Common myeloid progenitor, CD34-positive (primary cell): ENCODE measurements at regions of chr20 and their contacts with region 1.

Region 1: DNA sequence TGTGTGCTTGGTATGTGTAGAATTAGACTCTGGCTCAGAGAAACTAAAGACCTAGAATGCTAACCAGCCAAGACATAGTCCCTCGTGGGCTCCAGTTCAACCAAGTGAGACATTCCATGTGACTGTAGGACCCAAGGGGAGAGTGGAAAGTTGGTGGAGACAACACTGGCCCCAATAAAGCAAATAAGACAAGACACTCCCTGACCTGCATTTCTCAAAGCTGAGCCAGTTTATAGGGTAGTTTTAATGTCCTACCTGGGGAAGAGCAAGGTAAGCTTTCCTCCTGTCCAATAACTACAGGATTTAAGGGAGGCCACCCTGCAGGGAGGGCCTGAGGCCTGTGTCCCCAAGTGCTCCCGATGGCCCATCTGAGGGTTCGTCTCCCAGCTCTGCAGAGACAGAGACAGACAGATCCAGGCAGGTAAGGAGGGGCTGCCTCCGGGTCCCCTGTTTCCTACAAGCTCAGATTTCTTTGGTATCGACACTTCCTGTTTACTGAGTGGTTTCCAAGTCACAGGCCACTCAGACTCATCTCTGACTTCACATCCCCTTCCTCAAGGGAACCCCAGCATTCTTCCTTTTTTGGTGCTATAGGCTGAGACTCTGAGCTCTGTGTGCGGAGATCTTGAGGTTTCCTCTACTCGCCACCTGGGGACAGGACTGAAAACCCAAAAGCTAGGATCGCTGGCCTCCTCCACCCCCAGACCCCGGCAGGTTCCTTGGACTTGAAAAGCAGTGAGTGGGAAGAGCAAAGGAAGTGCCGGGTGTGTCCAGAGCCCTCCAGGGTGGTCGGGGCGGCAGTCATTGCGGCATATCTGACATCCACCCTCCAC is 92.4 kb downstream of the PRND start:
- DNase-seq: peak; percentile 91 to 95 (median 94)
- H3K4me3 ChIP-seq: peak overlapping the region in 6 of 7 experiments; percentile 15 to 67 (median 60)
- H3K27ac ChIP-seq: peak overlapping the region; percentile 93 to 95
- H3K4me1 ChIP-seq: peaks cover 25 to 74% (median 70%) of the 10 kb centered on the region in 4 experiments
- H3K27me3 ChIP-seq: no peaks in the 10 kb centered on the region

Region 2: GRCh38 chr20:4227085-4227821 is 586.8 kb before region 1 on chr20:
- CTCF ChIA-PET with region 1: no interaction called
- POLR2A ChIA-PET with region 1: no interaction called
- DNase-seq: no peak
- H3K4me3 ChIP-seq: no peak overlapping the region
- H3K27ac ChIP-seq: no peak overlapping the region
- H3K4me1 ChIP-seq: peaks cover 0 to 2% (median 0%) of the 10 kb centered on the region in 4 experiments
- H3K27me3 ChIP-seq: peaks cover 0 to 15% (median 10%) of the 10 kb centered on the region in 5 experiments

Region 3: DNA sequence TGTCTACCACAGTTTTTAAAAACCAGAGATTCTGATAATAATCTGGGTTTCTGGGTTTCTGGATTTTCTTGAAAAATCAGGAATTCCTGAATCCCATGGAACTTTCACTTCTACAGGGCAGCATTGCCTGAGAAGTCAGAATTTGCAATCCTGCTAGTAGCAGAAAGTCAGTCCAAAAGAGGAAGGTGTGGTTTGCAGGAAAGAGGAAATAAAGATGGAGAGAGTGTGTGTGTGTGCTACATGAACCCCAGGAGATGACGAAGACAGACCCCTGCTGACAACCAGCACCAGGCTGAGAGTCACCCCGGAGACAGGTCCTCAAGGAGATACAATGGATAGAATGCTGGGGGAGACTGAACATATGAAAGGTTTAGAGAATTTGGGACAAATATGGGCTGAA is 47.4 kb before region 1 on chr20:
- CTCF ChIA-PET with region 1: interaction called, 6 read pairs
- POLR2A ChIA-PET with region 1: interaction called, 10 read pairs
- DNase-seq: peak; percentile 90 to 95 (median 91)
- H3K4me3 ChIP-seq: peak overlapping the region in 3 of 7 experiments; percentile 2 to 49 (median 43)
- H3K27ac ChIP-seq: peak overlapping the region; percentile 85 to 95
- H3K4me1 ChIP-seq: peaks cover 19 to 35% (median 24%) of the 10 kb centered on the region in 4 experiments
- H3K27me3 ChIP-seq: no peaks in the 10 kb centered on the region

Region 4: DNA sequence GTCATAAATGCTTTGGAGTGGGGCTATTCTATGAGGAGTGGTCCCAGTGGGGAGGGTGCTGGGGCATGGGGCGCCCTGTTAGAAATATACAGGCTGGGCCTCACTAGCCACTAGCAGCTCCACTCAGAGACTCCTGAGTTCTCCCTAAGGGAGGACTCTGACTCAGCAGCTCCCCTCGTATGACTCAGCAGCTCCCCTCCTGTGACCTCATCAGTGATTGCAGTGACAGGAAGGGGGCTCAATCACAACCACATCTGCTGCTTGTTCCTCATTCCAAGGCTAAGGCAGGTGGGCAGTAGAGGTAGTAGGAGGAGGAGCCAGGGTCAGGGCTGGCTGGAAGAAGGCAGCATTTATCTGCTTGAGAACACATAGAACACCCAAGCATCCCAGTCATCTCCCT is 18.7 kb before region 1 on chr20:
- CTCF ChIA-PET with region 1: interaction called, 42 read pairs
- POLR2A ChIA-PET with region 1: interaction called, 5 read pairs
- DNase-seq: peak; percentile 90 to 97 (median 97)
- H3K4me3 ChIP-seq: no peak overlapping the region
- H3K27ac ChIP-seq: no peak overlapping the region
- H3K4me1 ChIP-seq: peaks cover 0 to 14% (median 12%) of the 10 kb centered on the region in 4 experiments
- H3K27me3 ChIP-seq: no peaks in the 10 kb centered on the region